Activated CD4-positive, alpha-beta T cell treated with anti-CD3 and anti-CD28 coated beads, Interleukin-2, amount 10 ng/mL, durations not matched to agents 24 days and 14 days (primary cell): ENCODE measurements at regions of chr5 and their contacts with region 1.

Region 1: DNA sequence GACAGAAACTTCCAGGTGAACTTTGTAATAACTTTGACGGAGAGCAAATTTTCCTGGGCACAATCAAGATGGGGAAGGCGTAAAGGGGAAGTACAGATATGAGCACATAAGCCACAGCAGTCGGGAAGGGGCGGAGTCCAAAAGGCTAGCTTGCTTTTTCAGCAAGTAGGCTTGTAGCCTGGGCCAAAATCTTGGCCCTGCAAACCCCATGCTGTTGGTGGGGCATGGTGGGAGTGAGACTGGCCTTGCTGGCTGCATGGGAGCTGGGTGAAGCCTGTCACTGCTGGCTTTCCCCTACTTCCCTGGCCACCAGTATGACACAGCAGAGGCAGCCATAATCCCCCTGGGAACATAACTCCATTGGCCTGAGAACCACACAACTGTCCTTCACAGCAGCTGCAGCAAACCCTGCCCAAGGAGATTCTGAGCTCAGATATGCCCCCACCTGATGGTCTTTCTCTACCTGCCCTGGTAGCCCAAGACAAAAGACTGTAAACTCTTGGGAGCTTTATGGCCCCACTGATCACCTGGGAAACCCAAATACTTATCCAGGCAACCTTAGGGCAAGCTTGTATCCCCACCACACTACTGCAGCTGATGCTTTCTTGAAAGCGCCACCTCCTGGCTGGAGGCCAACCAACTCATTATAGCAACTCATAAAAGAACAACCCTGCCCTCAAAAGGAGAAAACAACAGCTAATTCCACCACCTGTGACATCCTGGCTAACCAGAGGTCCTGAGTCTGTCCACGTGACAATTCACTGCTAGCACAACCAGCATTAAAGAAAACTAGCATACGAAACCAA is 24.0 kb downstream of the DCTN4 start:
- DNase-seq: peak; percentile 62
- H3K4me3 Mint-ChIP-seq: no peak overlapping the region
- H3K27ac Mint-ChIP-seq: peak overlapping the region; percentile 62
- H3K4me1 Mint-ChIP-seq: peaks cover 41% of the 10 kb centered on the region
- H3K27me3 Mint-ChIP-seq: no peaks in the 10 kb centered on the region

Region 2: GRCh38 chr5:150672237-150672883 is 62.4 kb before region 1 on chr5:
- intact Hi-C with region 1: no loop called
- DNase-seq: peak; percentile 74
- H3K4me3 Mint-ChIP-seq: peak overlapping the region; percentile 80
- H3K27ac Mint-ChIP-seq: no peak overlapping the region
- H3K4me1 Mint-ChIP-seq: peaks cover 3% of the 10 kb centered on the region
- H3K27me3 Mint-ChIP-seq: peaks cover 25% of the 10 kb centered on the region

Region 3: GRCh38 chr5:150751096-150751891 is 16.5 kb after region 1 on chr5:
- intact Hi-C with region 1: loop called (anchors 2 kb)
- DNase-seq: no peak
- H3K4me3 Mint-ChIP-seq: no peak overlapping the region
- H3K27ac Mint-ChIP-seq: peak overlapping the region; percentile 2
- H3K4me1 Mint-ChIP-seq: peaks cover 31% of the 10 kb centered on the region
- H3K27me3 Mint-ChIP-seq: no peaks in the 10 kb centered on the region